MCF 10A (cell line): ENCODE measurements at regions of chr18 and their contacts with region 1.

Region 1: GRCh38 chr18:8800449-8800848 is 95.1 kb downstream of the MTCL1 start:
- DNase-seq: peak; percentile 92
- H3K4me3 Mint-ChIP-seq: peak overlapping the region; percentile 53
- H3K27ac Mint-ChIP-seq: peak overlapping the region; percentile 83
- H3K4me1 Mint-ChIP-seq: peaks cover 27% of the 10 kb centered on the region
- H3K27me3 Mint-ChIP-seq: no peaks in the 10 kb centered on the region
- CTCF ChIP-seq: no peak

Region 2: GRCh38 chr18:8685141-8685913 is 115.1 kb before region 1 on chr18:
- CTCF ChIA-PET with region 1: no interaction called
- POLR2A ChIA-PET with region 1: interaction called, 12 read pairs
- intact Hi-C with region 1: no loop called
- DNase-seq: peak; percentile 85
- H3K4me3 Mint-ChIP-seq: peak overlapping the region; percentile 54
- H3K27ac Mint-ChIP-seq: peak overlapping the region; percentile 92
- H3K4me1 Mint-ChIP-seq: peaks cover 9% of the 10 kb centered on the region
- H3K27me3 Mint-ChIP-seq: no peaks in the 10 kb centered on the region
- CTCF ChIP-seq: no peak

Region 3: DNA sequence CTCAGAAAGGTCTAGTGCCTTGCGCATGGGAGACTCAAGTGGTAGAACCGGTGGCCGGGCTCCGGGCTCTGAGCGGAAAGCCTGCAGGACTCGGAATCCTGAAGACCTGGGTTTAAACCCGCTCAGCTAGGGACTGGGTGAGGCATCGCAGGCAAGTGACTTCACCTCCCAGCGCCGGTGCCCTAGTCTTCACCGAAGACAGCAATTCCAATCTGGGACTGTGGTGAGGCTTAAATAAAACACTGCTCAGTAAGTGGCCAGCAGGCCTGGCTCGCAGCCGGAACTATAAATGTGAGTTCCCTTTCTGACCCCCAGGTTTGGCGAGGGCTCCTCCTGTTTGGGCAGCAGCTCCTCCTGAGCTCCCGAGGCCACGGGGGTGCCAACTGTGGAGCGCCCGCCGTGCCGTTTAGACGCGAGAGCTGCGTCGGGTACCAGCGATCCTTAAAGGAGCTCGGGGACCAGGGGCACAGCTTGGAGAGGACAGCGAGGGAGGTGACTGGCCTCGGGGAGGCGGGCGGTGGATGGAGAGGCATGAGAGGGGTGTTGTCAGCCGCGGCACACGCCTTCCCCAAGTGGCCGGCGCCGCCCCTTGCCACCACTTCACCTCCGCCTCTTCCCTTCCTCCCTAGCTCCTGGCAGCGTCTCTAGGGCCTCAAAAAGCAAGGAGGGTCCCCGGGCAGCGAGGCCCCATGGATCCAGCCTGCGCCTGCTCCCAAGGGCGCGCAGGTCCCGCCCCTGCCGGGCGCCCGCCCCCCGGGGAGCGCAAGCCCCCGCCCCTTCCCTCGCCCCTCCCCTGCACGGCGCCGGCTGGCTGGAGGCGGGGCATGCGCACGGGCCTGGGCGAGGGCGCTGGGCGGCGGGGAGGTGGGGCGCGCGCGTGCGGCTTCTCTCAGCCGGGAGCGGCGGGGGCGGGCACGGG is 95.8 kb before region 1 on chr18:
- CTCF ChIA-PET with region 1: no interaction called
- POLR2A ChIA-PET with region 1: interaction called, 11 read pairs
- intact Hi-C with region 1: loop called (anchors 5 kb)
- DNase-seq: peak; percentile 87
- H3K4me3 Mint-ChIP-seq: peak overlapping the region; percentile 90
- H3K27ac Mint-ChIP-seq: no peak overlapping the region
- H3K4me1 Mint-ChIP-seq: peaks cover 27% of the 10 kb centered on the region
- H3K27me3 Mint-ChIP-seq: no peaks in the 10 kb centered on the region
- CTCF ChIP-seq: no peak

Region 4: GRCh38 chr18:8811120-8811519 is 10.7 kb after region 1 on chr18:
- CTCF ChIA-PET with region 1: interaction called, 4 read pairs
- POLR2A ChIA-PET with region 1: interaction called, 15 read pairs
- intact Hi-C with region 1: no loop called
- DNase-seq: peak; percentile 80
- H3K4me3 Mint-ChIP-seq: no peak overlapping the region
- H3K27ac Mint-ChIP-seq: peak overlapping the region; percentile 69
- H3K4me1 Mint-ChIP-seq: peaks cover 34% of the 10 kb centered on the region
- H3K27me3 Mint-ChIP-seq: no peaks in the 10 kb centered on the region
- CTCF ChIP-seq: no peak

Region 5: DNA sequence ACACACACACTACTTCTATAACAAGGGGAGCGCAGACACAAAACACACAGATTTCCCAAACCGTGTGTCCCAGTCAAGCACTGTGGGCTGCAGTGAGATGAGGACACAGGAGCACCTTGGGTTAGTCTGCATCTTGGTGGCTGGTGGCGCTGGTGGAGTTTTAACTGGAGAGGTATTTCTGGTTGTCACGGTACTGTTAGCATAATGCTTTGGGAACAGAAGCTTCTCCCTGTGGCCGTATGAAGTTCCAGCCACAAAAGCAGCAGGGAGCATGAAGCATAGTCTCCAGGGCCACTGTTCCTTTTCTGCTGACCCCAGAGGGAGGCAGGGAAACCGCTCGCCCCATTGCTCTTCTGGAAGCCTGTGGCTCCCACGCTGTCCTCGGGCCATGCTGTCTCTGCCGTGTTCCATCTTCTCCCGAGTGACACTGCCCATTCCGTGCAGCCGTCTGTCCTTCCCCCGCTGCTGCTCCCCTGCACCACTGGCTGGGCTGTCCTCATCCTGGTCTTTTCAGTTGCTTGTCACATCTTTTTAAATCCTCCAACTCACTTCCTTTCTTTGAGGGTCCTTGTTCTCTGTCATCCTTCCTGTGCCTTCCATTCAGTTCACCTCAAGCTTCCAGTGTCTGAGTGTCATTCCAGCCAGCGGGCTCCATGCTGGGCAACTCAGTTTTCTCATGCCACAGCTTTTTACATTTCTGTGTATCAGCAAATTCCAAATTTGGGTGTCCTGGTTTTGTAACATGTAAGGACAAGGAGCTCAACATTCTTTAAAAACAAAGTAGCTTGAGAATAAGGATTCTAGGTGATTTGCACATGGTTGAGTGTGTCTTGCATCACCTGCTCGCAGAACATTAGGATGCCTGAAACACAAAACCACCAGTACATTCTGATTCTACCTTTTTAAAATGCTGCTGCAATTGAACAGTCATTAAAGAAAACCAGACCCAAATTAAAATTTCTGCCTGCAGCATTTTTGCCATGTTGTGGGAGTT is 29.9 kb after region 1 on chr18:
- CTCF ChIA-PET with region 1: interaction called, 5 read pairs
- POLR2A ChIA-PET with region 1: interaction called, 10 read pairs
- intact Hi-C with region 1: no loop called
- DNase-seq: no peak
- H3K4me3 Mint-ChIP-seq: no peak overlapping the region
- H3K27ac Mint-ChIP-seq: no peak overlapping the region
- H3K4me1 Mint-ChIP-seq: peaks cover 10% of the 10 kb centered on the region
- H3K27me3 Mint-ChIP-seq: no peaks in the 10 kb centered on the region
- CTCF ChIP-seq: no peak

Region 6: DNA sequence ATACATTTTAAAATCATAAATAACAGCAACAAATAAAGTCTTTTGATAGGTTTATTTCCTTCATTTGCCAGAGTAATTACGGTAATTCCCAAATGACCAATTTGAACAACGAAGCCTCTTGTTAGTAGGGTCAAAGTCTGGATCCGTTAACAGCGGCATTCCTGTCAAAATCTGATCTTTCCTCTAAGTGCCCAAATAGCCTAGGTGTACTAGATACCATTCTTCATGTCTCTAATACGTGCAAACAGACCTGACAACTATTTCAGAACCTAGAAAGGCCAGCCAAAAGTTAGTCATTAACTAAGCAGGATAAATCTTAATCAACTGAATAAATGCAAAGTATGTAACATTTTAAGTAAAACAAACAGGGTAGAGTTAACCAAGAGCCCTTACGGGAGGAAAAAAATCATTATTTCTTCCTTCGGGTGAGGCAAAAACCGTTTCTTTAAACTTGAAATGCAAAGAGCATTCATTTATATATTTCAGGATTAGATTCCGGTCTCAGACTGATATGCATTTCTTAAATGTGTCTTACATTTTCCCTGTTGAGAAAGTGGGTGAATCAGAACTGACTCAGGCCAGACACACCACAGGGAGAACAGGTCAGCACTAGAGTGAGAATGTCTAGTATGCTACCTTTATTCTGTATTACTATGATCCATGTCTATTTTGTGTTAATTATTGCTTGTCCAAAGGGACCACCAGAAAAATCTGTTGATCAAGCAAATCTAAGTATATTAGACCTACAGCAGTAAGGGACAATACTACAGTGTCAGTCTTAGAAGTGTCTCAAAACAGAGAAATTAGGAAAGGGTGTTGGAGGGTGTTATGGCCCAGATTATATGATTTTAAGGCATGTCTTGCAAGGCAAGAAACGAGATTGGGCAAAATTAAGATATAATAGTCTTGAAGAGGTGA is 160.6 kb after region 1 on chr18:
- CTCF ChIA-PET with region 1: no interaction called
- POLR2A ChIA-PET with region 1: interaction called, 4 read pairs
- intact Hi-C with region 1: loop called (anchors 2 kb)
- DNase-seq: peak; percentile 67
- H3K4me3 Mint-ChIP-seq: no peak overlapping the region
- H3K27ac Mint-ChIP-seq: peak overlapping the region; percentile 71
- H3K4me1 Mint-ChIP-seq: peaks cover 9% of the 10 kb centered on the region
- H3K27me3 Mint-ChIP-seq: no peaks in the 10 kb centered on the region
- CTCF ChIP-seq: no peak

Region 7: DNA sequence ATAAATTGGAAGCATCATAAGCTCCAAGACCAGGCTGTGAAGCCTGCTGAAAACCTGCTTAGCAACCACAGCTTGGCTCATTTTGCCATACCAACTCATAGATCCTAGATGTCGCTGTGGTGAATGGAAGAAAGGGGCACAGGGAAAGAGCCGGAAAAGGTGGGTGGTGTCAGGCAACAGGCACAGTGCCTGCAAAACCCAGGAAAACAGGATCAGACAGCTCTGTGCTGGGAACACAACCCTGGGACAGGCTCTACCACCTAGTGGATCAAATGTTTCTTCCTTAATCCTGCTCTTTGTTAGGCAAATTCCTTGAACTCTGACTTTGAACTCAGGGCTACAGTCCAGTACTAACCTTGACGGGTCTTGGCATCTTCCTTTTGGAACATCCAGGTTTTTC is 565.7 kb after region 1 on chr18:
- CTCF ChIA-PET with region 1: no interaction called
- POLR2A ChIA-PET with region 1: no interaction called
- intact Hi-C with region 1: no loop called
- DNase-seq: peak; percentile 70
- H3K4me3 Mint-ChIP-seq: no peak overlapping the region
- H3K27ac Mint-ChIP-seq: peak overlapping the region; percentile 13
- H3K4me1 Mint-ChIP-seq: peaks cover 28% of the 10 kb centered on the region
- H3K27me3 Mint-ChIP-seq: no peaks in the 10 kb centered on the region
- CTCF ChIP-seq: peak; percentile 36